ENCODE measurements at regions of chr21 and their contacts with region 1.

Region 1: GRCh38 chr21:36319765-36320420 is at the start of gene MORC3:
- DNase-seq: peak; percentile 100
- ATAC-seq: peak; percentile 89
- H3K4me3 ChIP-seq: peak within 1 kb of the TSS; percentile 90
- H3K27ac ChIP-seq: peak within 1 kb of the TSS; percentile 77
- H3K4me1 ChIP-seq: peaks cover 20% of the 10 kb centered on the region
- H3K27me3 ChIP-seq: no peaks in the 10 kb centered on the region
- CTCF ChIP-seq: no peak
- total RNA-seq, gene MORC3: 17.9 and 23.0 TPM in 2 replicates

Region 2: DNA sequence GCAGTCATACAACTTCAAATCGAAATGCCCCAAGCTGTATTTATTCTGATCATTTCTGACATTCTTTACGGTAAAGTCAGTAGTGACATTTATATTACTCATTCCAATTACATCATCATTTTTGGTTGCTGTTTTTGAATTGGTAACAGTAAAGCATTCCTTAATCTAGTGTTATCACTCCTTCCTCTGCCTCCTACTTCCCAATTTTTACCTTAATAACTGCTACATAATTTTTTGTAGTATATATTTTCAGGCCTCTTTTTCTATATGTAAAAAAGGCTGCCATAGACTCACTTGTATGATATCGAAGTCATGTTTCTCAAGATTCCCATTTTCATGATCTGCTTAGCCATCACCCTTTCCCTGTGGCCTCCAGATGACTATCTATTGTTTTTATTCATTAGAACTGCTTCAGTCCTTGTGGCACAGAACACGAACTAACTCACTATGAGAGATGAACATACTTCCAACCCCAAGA is 1438.0 kb before region 1 on chr21:
- CTCF ChIA-PET with region 1: no interaction called
- POLR2A ChIA-PET with region 1: interaction called, 15 read pairs
- intact Hi-C with region 1: no loop called
- DNase-seq: peak; percentile 96
- ATAC-seq: peak; percentile 40
- H3K4me3 ChIP-seq: peak overlapping the region; percentile 95
- H3K27ac ChIP-seq: peak overlapping the region; percentile 97
- H3K4me1 ChIP-seq: peaks cover 66% of the 10 kb centered on the region
- H3K27me3 ChIP-seq: no peaks in the 10 kb centered on the region
- CTCF ChIP-seq: no peak

Region 3: GRCh38 chr21:36060159-36060921 is 259.6 kb before region 1 on chr21 and contains the start of gene SETD4:
- CTCF ChIA-PET with region 1: no interaction called
- POLR2A ChIA-PET with region 1: interaction called, 11 read pairs
- intact Hi-C with region 1: no loop called
- DNase-seq: peak; percentile 89
- ATAC-seq: peak; percentile 89
- H3K4me3 ChIP-seq: peak within 1 kb of the TSS; percentile 87
- H3K27ac ChIP-seq: peak within 1 kb of the TSS; percentile 84
- H3K4me1 ChIP-seq: peaks cover 21% of the 10 kb centered on the region
- H3K27me3 ChIP-seq: no peaks in the 10 kb centered on the region
- CTCF ChIP-seq: no peak
- total RNA-seq, gene SETD4: 12.5 and 17.0 TPM in 2 replicates

Region 4: DNA sequence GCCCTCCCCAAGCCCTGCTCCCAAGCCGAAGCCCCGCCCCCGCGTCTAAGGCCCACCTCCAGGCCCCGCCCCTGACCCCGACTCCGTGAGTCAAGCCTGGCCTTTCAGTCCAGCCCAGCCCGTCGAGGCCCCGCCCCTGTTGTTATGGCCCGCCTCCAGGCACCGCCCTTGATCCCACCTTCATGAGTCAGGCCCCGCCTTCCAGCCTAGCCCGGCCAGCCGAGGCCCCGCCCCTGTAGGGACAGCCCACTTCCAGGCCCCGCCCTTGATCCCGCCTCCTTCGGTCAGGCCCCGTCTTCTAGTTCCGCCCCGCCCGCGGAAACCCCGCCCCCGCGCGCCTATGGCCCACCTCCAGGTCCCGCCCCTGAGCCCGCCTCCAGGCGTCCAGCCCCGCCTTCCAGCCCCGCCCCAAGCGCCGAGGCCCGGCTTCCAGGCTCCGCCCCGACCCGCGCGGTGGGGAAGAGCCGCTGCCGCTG is 163.5 kb before region 1 on chr21:
- CTCF ChIA-PET with region 1: no interaction called
- POLR2A ChIA-PET with region 1: interaction called, 5 read pairs
- intact Hi-C with region 1: loop called (anchors 5 kb)
- DNase-seq: peak; percentile 99
- ATAC-seq: peak; percentile 87
- H3K4me3 ChIP-seq: peak overlapping the region; percentile 96
- H3K27ac ChIP-seq: no peak overlapping the region
- H3K4me1 ChIP-seq: peaks cover 19% of the 10 kb centered on the region
- H3K27me3 ChIP-seq: no peaks in the 10 kb centered on the region
- CTCF ChIP-seq: no peak

Region 5: DNA sequence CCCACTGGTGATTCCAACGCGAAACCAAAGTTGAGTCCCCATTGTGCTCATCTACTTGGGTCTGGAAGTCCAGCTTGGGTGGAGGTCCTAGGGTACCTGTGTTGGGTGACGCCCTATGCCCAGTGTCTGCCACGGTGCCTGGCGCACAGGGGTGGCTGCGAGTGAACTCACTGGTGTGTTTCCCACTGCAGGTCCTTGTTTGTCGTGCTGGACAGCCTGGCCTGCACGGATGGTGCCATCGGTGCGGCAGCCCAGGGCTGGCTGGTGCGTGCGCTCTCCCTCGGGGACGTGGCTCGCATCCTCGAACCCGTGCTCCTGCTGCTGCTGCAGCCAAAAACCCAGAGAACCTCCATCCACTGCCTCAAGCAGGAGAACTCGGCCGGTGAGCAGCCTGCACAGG is 80.3 kb before region 1 on chr21:
- CTCF ChIA-PET with region 1: no interaction called
- POLR2A ChIA-PET with region 1: no interaction called
- intact Hi-C with region 1: no loop called
- DNase-seq: no peak
- ATAC-seq: no peak
- H3K4me3 ChIP-seq: no peak overlapping the region
- H3K27ac ChIP-seq: no peak overlapping the region
- H3K4me1 ChIP-seq: 0 out of 2 replicates have a peak, but pooled peaks cover 3% of the 10 kb centered on the region
- H3K27me3 ChIP-seq: no peaks in the 10 kb centered on the region
- CTCF ChIP-seq: no peak

Region 6: DNA sequence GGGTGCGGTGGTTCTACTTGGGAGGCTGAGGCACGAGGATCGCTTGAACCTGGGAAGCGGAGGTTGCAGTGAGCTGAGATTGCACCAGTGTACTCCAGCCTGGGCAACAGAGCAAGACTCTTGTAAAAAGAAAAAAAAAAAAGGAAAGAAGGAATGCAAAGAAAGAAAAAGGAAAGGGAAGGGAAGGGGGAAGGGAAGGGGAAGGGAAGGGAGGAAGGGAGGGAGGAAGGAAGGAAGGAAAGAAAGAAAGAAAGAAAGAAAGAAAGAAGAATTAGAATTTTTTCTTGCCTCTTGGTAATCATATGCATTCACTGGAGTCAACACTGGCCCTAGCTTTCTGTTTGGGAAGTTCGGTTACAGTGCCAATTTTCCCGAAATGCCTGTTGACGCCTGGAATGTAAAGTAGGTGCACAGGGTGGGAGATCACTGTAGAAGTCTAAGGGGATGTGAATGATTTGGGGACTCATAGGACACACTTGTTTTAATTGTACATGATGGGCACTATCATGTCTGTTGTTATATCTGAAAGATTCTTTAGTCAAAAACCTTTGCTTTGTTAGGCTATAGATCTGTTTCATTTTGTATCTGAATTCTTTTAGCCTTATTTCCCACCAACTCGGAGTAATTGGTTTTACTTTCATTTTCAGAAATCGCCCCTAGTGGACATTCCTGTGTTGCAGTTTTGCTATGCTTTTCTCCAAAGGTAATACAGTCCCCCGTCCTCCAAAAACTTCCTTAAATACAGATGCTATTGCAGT is 59.7 kb before region 1 on chr21:
- CTCF ChIA-PET with region 1: interaction called, 8 read pairs
- POLR2A ChIA-PET with region 1: interaction called, 14 read pairs
- intact Hi-C with region 1: no loop called
- DNase-seq: peak; percentile 86
- ATAC-seq: peak; percentile 91
- H3K4me3 ChIP-seq: peak overlapping the region; percentile 65
- H3K27ac ChIP-seq: no peak overlapping the region
- H3K4me1 ChIP-seq: no peaks in the 10 kb centered on the region; the same call in 1 of the 2 replicates
- H3K27me3 ChIP-seq: no peaks in the 10 kb centered on the region
- CTCF ChIP-seq: peak; percentile 91

Region 7: GRCh38 chr21:36347278-36347961 is 27.5 kb after region 1 on chr21:
- CTCF ChIA-PET with region 1: no interaction called
- POLR2A ChIA-PET with region 1: interaction called, 11 read pairs
- intact Hi-C with region 1: no loop called
- DNase-seq: no peak
- ATAC-seq: peak; percentile 82
- H3K4me3 ChIP-seq: no peak overlapping the region
- H3K27ac ChIP-seq: no peak overlapping the region
- H3K4me1 ChIP-seq: peaks cover 10% of the 10 kb centered on the region
- H3K27me3 ChIP-seq: no peaks in the 10 kb centered on the region
- CTCF ChIP-seq: no peak